ENCODE measurements at regions of chr17 and their contacts with region 1.

Region 1: DNA sequence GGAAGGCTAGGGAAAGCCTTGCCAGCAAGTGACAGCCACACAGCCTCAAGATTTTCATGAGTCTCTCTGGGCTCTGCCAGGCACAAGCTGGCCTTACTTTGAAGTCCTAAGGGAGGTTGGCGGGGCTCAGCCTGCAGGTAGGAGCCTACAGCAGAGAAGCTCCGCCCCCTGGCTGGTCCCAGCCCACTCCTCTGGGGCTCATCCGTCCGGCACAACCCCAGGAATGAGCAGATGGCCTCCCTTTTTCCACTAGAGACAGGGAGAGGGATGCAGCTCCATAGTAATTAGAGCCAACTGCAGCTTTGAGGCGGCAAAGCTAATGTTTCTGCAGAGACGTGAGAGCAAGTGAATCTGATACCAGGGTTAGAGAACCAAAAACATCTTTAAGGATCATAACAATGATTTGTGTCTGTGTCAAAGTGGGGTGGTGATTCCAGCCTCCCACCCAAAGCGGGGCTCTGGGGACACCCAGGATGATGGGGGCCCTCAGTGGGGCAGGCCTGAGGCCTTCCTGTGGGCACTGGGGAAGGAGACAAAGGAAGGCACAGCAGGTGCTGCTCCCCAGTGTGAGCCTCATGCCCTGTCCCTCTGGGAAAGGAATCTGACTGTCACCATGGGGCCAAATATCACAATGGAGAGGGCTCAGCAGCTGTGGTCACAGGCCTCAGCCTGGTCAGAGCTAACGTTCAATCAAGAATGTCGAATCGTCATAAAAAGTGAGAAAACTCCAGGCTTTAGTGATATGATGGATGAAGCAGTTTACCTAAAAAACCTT is 61.5 kb downstream of the RBFOX3 start:
- DNase-seq: no peak
- H3K4me3 ChIP-seq: no peak overlapping the region
- H3K27ac ChIP-seq: no peak overlapping the region
- H3K4me1 ChIP-seq: no peaks in the 10 kb centered on the region
- H3K27me3 ChIP-seq: no peaks in the 10 kb centered on the region
- CTCF ChIP-seq: no peak
- POLR2A ChIP-seq: no peak

Region 2: GRCh38 chr17:79315358-79316105 is 233.8 kb before region 1 on chr17:
- intact Hi-C with region 1: no loop called
- DNase-seq: no peak
- H3K4me3 ChIP-seq: no peak overlapping the region
- H3K27ac ChIP-seq: no peak overlapping the region
- H3K4me1 ChIP-seq: no peaks in the 10 kb centered on the region
- H3K27me3 ChIP-seq: no peaks in the 10 kb centered on the region
- CTCF ChIP-seq: no peak
- POLR2A ChIP-seq: no peak

Region 3: GRCh38 chr17:79607940-79608623 is 58.8 kb after region 1 on chr17:
- intact Hi-C with region 1: loop called (anchors 10 kb)
- DNase-seq: peak; percentile 39 to 46
- H3K4me3 ChIP-seq: no peak overlapping the region
- H3K27ac ChIP-seq: no peak overlapping the region
- H3K4me1 ChIP-seq: peaks cover 0 to 5% of the 10 kb centered on the region in 2 donors
- H3K27me3 ChIP-seq: peaks cover 26% of the 10 kb centered on the region
- CTCF ChIP-seq: peak in 1 of 6 experiments; percentile 15
- POLR2A ChIP-seq: no peak